ENCODE measurements at regions of chr15 and their contacts with region 1.

Region 1: DNA sequence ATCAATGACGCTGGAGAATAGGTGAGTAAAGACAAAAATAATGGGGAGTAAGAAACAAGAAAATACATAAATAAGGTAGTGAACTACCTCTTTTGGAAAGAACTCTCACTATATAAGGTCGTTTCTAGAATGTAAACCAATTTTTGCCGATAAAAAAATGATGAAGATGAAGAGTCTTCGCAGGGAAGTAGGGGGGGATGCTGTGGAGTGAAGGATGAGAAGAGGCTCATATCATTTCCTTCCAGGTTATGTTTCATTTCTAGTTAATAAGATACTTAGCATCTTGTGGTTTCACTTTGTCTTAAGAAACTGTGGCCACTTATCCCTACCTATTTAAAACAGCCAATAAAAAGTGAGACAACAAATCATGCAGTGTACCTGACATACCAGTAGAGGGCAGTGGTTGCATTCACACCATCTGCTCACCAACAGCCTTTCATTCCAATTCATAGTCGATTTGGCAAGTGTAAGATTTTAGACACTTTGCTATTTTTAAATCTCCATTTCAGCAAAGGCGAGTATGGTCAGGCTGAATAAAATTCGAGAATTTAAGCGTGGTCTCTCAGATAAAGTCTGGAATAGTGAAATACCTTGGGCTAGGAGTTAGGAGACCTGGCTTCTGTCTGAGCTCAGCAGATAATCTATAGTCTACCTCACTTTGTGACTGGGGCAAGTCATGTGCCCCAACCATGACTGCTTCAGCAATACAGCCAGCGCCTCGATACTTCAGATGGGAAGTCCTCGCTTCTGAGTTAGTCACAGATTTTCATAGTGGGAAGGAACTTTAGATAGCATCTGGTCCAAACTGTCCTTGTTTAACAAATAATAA is 28.9 kb upstream of the ICE2 start:
- DNase-seq: peak; percentile 42
- H3K4me3 ChIP-seq: no peak overlapping the region
- H3K27ac ChIP-seq: no peak overlapping the region
- H3K4me1 ChIP-seq: no peaks in the 10 kb centered on the region
- H3K27me3 ChIP-seq: no peaks in the 10 kb centered on the region
- CTCF ChIP-seq: peak; percentile 86 to 89 (median 88)
- POLR2A ChIP-seq: no peak

Region 2: DNA sequence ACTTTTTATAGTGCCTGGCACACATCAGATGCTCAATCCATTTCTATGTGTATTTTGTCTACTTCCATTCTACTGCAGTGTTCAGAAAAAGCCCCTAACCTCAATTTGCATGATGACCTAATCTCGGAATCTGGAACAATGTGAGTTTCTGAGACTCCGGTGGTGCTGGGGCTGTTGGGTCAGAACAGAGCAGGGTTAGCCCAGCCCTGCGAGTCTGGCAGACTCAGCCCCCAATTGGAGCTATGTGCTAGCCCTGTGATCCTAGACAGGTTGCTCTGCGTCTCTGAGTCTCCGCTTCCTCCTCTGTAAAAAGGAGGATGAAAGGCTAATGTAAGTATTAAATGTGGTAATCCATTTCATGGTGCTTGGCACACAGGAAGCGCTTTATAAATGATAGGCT is 66.1 kb after region 1 on chr15:
- intact Hi-C with region 1: no loop called
- DNase-seq: no peak
- H3K4me3 ChIP-seq: no peak overlapping the region
- H3K27ac ChIP-seq: no peak overlapping the region
- H3K4me1 ChIP-seq: peaks cover 12% of the 10 kb centered on the region
- H3K27me3 ChIP-seq: no peaks in the 10 kb centered on the region
- CTCF ChIP-seq: no peak
- POLR2A ChIP-seq: no peak

Region 3: GRCh38 chr15:61834076-61834697 is 1326.4 kb after region 1 on chr15:
- intact Hi-C with region 1: loop called (anchors 5 kb)
- DNase-seq: peak; percentile 75
- H3K4me3 ChIP-seq: no peak overlapping the region
- H3K27ac ChIP-seq: no peak overlapping the region
- H3K4me1 ChIP-seq: no peaks in the 10 kb centered on the region
- H3K27me3 ChIP-seq: no peaks in the 10 kb centered on the region
- CTCF ChIP-seq: peak; percentile 87 to 95 (median 94)
- POLR2A ChIP-seq: no peak

Measured in prostate gland (tissue), 2 donors.